ENCODE measurements at regions of chr1 and their contacts with region 1.

Region 1: GRCh38 chr1:30779294-30780071 is 21.9 kb upstream of the LAPTM5 start:
- DNase-seq: peak; percentile 55
- ATAC-seq: peak; percentile 79
- H3K4me3 ChIP-seq: no peak overlapping the region
- H3K27ac ChIP-seq: no peak overlapping the region
- H3K4me1 ChIP-seq: peaks cover 9 to 35% of the 10 kb centered on the region in 2 experiments; a peak in 3 of 4 replicates
- H3K27me3 ChIP-seq: no peaks in the 10 kb centered on the region
- CTCF ChIP-seq: peak; percentile 93 to 96 (median 94)
- POLR2A ChIP-seq: no peak
- RAD21 ChIP-seq: peak; percentile 96

Region 2: DNA sequence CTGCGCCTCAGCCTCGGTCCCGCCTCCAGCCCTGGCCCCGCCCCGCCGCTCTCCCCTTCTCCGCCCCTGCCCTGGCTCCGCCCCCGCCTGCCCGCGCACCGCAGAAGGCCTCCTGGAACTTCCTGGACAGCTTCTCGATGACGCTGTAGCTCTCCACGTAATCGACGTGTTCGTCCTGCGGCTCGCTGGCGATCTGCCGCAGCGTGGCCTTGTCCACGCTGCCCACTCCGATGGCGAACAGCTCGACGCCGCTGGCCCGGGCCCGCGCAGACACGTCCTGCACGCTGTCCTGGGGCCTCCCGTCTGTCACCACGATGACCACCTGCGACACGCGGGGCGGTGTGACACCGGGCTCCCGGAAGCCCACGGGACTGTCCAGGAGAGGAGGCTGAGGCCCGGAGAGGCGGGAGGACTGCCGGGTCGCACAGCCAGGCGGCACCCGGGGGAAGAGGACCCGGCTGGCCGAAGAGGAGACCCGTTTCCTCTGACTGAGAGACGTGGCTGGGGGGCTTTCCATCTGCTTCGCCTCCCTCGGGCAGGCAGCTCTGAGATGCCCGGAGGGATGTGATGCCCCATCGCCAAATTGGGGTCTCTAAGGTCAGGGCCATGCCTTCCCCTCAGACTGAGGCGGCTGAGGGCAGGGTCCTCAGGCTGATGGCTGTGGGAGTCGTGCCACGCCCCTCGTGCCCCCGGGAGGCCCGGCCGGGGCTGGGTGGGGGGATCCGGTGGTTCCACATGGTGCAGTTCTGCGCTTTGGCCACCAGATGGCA is 60.7 kb before region 1 on chr1:
- CTCF ChIA-PET with region 1: interaction called, 210 read pairs
- POLR2A ChIA-PET with region 1: interaction called, 43 read pairs
- RAD21 ChIA-PET with region 1: interaction called, 35 to 39 read pairs
- intact Hi-C with region 1: loop called (anchors 1 kb)
- DNase-seq: peak; percentile 91
- ATAC-seq: peak; percentile 81
- H3K4me3 ChIP-seq: peak overlapping the region; percentile 75 to 78
- H3K27ac ChIP-seq: peak overlapping the region; percentile 77
- H3K4me1 ChIP-seq: peaks cover 22 to 34% of the 10 kb centered on the region in 2 experiments
- H3K27me3 ChIP-seq: no peaks in the 10 kb centered on the region
- CTCF ChIP-seq: peak; percentile 83 to 94 (median 84)
- POLR2A ChIP-seq: peak; percentile 65
- RAD21 ChIP-seq: no peak; the same call in 1 of the 2 replicates

Region 3: GRCh38 chr1:30727824-30728223 is 51.7 kb before region 1 on chr1:
- CTCF ChIA-PET with region 1: interaction called, 49 read pairs
- POLR2A ChIA-PET with region 1: no interaction called
- RAD21 ChIA-PET with region 1: no interaction called
- intact Hi-C with region 1: no loop called
- DNase-seq: no peak
- ATAC-seq: peak; percentile 36
- H3K4me3 ChIP-seq: no peak overlapping the region
- H3K27ac ChIP-seq: no peak overlapping the region
- H3K4me1 ChIP-seq: no peaks in the 10 kb centered on the region
- H3K27me3 ChIP-seq: no peaks in the 10 kb centered on the region
- CTCF ChIP-seq: no peak
- POLR2A ChIP-seq: no peak
- RAD21 ChIP-seq: no peak

Region 4: DNA sequence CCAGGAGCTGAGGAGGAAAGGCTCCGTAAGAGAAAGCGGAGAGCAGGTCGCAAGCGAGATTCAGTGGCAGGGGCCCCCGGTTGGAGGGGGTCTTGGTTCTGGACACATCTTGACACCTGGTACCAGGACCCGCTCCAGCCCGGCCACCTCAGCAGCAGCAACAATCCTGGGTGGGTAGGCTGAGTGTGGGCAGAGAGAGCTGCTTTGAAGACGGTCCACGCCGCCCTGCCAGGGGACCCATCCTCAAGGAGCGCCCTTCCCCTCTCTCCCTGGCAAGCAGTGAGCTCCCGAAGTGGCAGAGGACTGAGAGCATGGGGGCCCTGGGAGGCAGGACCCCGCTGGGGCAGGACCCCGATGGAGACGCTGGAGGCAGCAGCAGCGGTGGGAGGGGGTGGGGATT is 13.7 kb after region 1 on chr1:
- CTCF ChIA-PET with region 1: interaction called, 18 read pairs
- POLR2A ChIA-PET with region 1: no interaction called
- RAD21 ChIA-PET with region 1: interaction called in 1 of 2 experiments, 4 read pairs
- intact Hi-C with region 1: no loop called
- DNase-seq: no peak
- ATAC-seq: no peak
- H3K4me3 ChIP-seq: no peak overlapping the region
- H3K27ac ChIP-seq: no peak overlapping the region
- H3K4me1 ChIP-seq: peaks cover 17 to 20% of the 10 kb centered on the region in 2 experiments
- H3K27me3 ChIP-seq: peaks cover 13% of the 10 kb centered on the region
- CTCF ChIP-seq: no peak
- POLR2A ChIP-seq: no peak
- RAD21 ChIP-seq: no peak

Region 5: GRCh38 chr1:30801771-30802198 is 22.3 kb after region 1 on chr1:
- CTCF ChIA-PET with region 1: interaction called, 18 read pairs
- POLR2A ChIA-PET with region 1: no interaction called
- RAD21 ChIA-PET with region 1: no interaction called
- intact Hi-C with region 1: no loop called
- DNase-seq: no peak
- ATAC-seq: peak; percentile 73
- H3K4me3 ChIP-seq: peak overlapping the region; percentile 26 to 41; a peak in 2 of 4 replicates
- H3K27ac ChIP-seq: no peak overlapping the region
- H3K4me1 ChIP-seq: peaks cover 23 to 32% of the 10 kb centered on the region in 2 experiments
- H3K27me3 ChIP-seq: peaks cover 4% of the 10 kb centered on the region; the same call in 1 of the 2 replicates
- CTCF ChIP-seq: peak; percentile 93 to 96 (median 95)
- POLR2A ChIP-seq: no peak
- RAD21 ChIP-seq: peak; percentile 100

Region 6: GRCh38 chr1:30911046-30911954 is 131.8 kb after region 1 on chr1:
- CTCF ChIA-PET with region 1: interaction called, 95 read pairs
- POLR2A ChIA-PET with region 1: interaction called, 10 read pairs
- RAD21 ChIA-PET with region 1: interaction called, 8 to 10 read pairs
- intact Hi-C with region 1: loop called (anchors 1 kb)
- DNase-seq: peak; percentile 74
- ATAC-seq: peak; percentile 74
- H3K4me3 ChIP-seq: no peak overlapping the region
- H3K27ac ChIP-seq: peak overlapping the region; percentile 83; the same call in 1 of the 2 replicates
- H3K4me1 ChIP-seq: peaks cover 28 to 39% of the 10 kb centered on the region in 2 experiments
- H3K27me3 ChIP-seq: no peaks in the 10 kb centered on the region
- CTCF ChIP-seq: peak; percentile 85 to 98 (median 87)
- POLR2A ChIP-seq: no peak
- RAD21 ChIP-seq: peak; percentile 100

Region 7: DNA sequence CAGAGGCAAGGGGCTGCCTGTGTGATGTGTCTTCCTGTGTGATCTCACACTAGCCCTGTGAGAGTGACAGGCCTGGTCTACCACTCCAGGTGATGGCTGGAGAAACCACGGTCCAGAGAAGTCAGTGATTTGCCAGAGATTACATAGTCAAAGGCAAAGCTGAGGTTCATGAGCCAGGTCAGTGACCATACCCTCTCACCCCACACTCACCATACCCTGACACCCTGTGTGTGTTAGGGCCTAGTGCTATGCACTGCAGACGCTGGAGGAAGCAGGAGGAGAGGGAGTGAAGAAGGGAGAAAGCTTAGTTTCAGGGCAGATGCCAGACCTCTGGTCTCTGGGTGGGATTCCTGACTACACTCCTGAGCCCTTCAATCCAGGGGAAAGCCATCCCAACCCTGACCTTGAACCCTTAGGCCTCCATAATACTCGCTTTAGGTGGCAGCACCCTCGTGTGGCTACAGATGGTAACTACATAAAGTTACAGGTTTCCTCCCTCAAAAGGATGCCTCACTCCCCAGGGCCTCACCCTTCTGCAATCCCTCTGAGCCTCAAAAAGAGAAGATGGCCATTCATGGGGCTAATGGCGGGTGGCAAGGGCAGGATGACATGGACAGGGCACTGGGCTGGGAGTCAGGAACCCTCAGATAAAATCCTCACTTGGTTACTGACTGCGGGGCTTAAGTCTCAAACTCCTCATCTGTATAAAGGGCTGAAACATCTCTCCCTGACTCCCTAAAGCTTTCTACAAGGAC is 149.8 kb after region 1 on chr1:
- CTCF ChIA-PET with region 1: interaction called, 11 read pairs
- POLR2A ChIA-PET with region 1: interaction called, 4 read pairs
- RAD21 ChIA-PET with region 1: no interaction called
- intact Hi-C with region 1: loop called (anchors 5 kb)
- DNase-seq: no peak
- ATAC-seq: peak; percentile 81
- H3K4me3 ChIP-seq: no peak overlapping the region
- H3K27ac ChIP-seq: no peak overlapping the region
- H3K4me1 ChIP-seq: peaks cover 0 to 8% of the 10 kb centered on the region in 2 experiments; a peak in 1 of 4 replicates
- H3K27me3 ChIP-seq: no peaks in the 10 kb centered on the region
- CTCF ChIP-seq: peak; percentile 66 to 81 (median 72); a peak in 5 of 6 replicates
- POLR2A ChIP-seq: no peak
- RAD21 ChIP-seq: peak; percentile 81

Measured in HCT116 (cell line).